ENCODE measurements at regions of chr19 and their contacts with region 1.

Region 1: DNA sequence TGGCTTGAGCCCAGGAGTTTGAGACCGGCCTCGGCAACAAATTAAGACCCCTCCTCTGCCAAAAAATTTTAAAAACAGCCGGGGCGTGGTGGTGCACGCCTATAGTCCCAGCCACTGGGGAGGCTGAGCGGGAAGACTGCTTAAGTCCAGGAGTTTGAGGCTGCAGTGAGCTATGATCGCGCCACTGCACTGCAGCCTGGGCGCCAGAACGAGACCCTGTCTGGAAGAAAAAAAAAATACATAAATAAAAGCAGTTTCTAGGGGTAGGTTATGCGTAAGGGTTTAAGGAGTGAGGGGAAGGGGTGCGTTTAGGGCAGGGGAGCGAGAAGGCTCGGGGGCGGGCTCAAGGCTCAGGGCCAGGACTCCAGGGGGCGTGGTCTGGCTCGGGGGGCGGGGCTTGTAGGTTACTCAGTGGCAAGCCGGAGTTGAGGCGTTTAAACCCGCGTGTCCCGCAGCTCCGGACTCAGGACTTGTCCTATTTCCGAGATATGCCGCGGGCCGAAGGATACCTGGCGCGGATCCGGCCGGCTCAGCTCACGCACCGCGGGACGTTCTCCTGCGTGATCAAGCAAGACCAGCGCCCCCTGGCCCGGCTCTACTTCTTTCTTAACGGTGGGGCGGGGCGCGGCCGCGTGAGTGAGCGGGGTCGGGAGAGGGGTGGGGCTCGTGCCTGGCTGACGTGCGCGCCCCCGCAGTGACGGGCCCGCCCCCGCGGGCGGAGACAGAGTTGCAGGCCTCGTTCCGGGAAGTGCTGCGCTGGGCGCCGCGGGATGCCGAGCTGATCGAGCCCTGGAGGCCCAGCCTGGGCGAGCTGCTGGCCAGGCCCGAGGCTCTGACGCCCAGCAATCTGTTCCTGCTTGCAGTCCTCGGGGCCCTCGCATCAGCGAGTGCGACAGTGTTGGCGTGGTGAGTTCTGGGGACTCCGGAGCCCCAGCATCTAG is 10.7 kb downstream of the SPACA6 start:
- DNase-seq: peak; percentile 67
- H3K4me3 ChIP-seq: peak overlapping the region; percentile 78
- H3K27ac ChIP-seq: peak overlapping the region; percentile 81
- H3K27me3 ChIP-seq: no peaks in the 10 kb centered on the region
- CTCF ChIP-seq: peak; percentile 61

Region 2: GRCh38 chr19:51282335-51282734 is 421.5 kb before region 1 on chr19:
- CTCF ChIA-PET with region 1: no interaction called
- POLR2A ChIA-PET with region 1: no interaction called
- DNase-seq: no peak
- H3K4me3 ChIP-seq: no peak overlapping the region
- H3K27ac ChIP-seq: no peak overlapping the region
- H3K27me3 ChIP-seq: no peaks in the 10 kb centered on the region
- CTCF ChIP-seq: no peak

Region 3: DNA sequence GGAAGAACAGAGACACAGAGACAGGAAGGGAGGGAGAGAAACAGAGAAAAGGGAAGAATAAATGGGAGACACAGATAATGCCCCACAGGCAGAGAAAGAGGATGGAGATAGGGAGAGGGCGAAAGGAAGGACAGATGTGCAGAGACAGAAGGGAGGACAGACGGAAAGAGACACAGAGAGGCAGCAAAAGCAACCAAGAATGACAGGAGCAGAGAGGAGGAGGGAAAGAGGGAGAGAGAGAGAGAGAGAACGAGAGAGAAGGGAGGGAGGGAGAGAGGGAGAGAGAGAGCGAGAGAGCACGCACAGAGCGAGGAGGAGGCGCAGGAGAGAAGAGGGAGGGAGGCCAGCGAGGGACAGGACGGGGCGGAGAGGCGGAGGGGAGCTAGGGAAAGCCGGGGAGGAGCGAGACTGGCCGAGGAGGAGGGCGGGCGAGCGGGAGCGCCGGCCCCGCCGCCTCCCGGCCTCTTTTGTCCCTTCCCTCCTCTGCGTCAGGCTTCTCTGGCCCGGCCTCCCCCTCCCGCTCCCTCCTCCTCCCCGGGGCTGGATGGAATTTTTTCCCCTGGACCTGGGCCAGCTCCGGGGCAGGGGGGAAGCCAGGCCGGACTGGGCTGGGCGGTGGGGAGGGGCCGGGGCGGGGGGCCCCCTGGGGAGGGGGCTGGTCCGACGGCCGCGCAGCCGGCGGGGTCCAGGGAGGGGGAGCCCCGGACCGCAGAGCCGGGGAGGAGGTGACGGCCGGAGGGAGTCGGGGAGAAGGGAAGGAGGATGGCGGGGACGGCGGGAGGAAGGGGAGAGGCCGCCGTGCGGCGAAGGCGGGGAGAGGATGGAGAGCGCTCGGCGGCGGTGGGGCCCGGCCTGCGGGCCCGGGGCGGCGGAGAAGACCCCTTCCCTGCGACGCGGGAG is 14.9 kb before region 1 on chr19:
- CTCF ChIA-PET with region 1: interaction called, 9 read pairs
- POLR2A ChIA-PET with region 1: interaction called, 36 read pairs
- DNase-seq: peak; percentile 85
- H3K4me3 ChIP-seq: peak overlapping the region; percentile 96
- H3K27ac ChIP-seq: peak overlapping the region; percentile 77
- H3K27me3 ChIP-seq: no peaks in the 10 kb centered on the region
- CTCF ChIP-seq: no peak